GM23248 (cell line): ENCODE measurements at regions of chr5 and their contacts with region 1.

Region 1: GRCh38 chr5:96601811-96602244 is 60.3 kb upstream of the CAST start:
- DNase-seq: peak; percentile 75
- H3K4me3 ChIP-seq: no peak overlapping the region
- H3K27ac ChIP-seq: no peak overlapping the region
- H3K4me1 ChIP-seq: peaks cover 17% of the 10 kb centered on the region
- H3K27me3 ChIP-seq: no peaks in the 10 kb centered on the region

Region 2: DNA sequence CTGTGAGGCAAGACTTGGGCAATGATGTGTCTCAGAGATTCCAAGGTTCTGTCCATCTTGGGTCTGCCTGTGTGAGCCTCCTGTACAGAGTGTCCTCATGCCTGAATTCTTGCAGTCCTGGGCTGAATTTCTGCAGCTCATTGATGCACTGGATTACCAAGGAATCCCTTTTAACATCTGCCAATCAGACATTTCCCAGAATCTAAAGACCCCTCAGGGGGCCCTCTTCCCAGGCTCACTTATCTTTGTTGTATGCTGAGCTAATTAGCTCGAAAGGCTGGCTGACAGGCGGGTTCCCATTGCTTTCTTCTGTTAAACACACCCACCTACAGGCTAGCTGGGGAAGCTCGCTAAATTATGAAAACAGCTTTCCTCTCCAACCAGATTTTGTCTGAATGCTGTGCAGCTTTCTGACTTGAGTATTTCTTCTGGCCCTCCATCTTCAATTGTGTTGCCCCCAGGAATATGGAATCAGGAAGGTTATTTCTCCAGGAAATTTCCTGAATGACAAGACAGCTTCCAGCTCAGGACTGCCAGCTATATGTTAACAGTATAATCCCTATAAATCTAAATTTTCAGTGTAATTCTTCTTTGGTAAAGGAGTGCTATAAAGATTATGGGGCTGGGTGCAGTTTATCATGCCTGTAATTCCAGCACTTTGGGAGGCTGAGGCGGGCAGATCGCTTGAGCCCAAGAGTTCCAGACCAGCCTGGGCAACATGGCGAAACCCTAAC is 540.9 kb after region 1 on chr5 and contains the start of gene LIX1:
- in situ Hi-C with region 1: loop called (anchors 25 kb)
- DNase-seq: peak; percentile 65
- H3K4me3 ChIP-seq: no peak within 1 kb of the TSS
- H3K27ac ChIP-seq: no peak within 1 kb of the TSS
- H3K4me1 ChIP-seq: no peaks in the 10 kb centered on the region
- H3K27me3 ChIP-seq: peaks cover 31% of the 10 kb centered on the region
- total RNA-seq, gene LIX1: not detected in 2 replicates